Pancreas (tissue), 10 donors: ENCODE measurements at regions of chr1 and their contacts with region 1.

Region 1: GRCh38 chr1:209576798-209577197 is 6.7 kb upstream of the CAMK1G start:
- DNase-seq: peak; percentile 64 to 93 (median 84)
- ATAC-seq: peak; percentile 91 to 100 (median 100)
- H3K4me3 ChIP-seq: no peak overlapping the region
- H3K27ac ChIP-seq: no peak overlapping the region
- H3K4me1 ChIP-seq: no peaks in the 10 kb centered on the region
- H3K27me3 ChIP-seq: peaks cover 0 to 3% (median 0%) of the 10 kb centered on the region in 4 donors
- CTCF ChIP-seq: peak; percentile 81 to 92 (median 90)

Region 2: DNA sequence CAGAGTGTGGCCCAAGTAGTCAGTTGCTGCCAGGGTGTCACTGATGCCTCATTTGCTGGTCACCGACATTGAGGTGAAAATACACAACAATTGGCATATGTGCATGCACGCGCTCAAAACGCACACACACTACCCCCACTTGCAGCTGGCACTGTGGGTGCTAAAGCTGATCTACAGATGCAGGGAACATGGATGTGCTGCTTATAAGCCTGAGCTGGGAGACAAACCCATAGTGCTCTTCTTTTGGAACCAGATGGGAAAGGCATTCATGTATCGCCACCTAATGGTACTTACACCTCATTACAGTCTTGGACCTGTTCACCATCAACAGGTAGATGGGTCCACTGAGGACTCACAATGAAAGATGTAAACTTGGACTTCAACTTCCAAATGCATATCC is 63.6 kb before region 1 on chr1:
- intact Hi-C with region 1: no loop called
- DNase-seq: no peak
- ATAC-seq: no peak
- H3K4me3 ChIP-seq: no peak overlapping the region
- H3K27ac ChIP-seq: no peak overlapping the region
- H3K4me1 ChIP-seq: no peaks in the 10 kb centered on the region
- H3K27me3 ChIP-seq: no peaks in the 10 kb centered on the region
- CTCF ChIP-seq: no peak

Region 3: DNA sequence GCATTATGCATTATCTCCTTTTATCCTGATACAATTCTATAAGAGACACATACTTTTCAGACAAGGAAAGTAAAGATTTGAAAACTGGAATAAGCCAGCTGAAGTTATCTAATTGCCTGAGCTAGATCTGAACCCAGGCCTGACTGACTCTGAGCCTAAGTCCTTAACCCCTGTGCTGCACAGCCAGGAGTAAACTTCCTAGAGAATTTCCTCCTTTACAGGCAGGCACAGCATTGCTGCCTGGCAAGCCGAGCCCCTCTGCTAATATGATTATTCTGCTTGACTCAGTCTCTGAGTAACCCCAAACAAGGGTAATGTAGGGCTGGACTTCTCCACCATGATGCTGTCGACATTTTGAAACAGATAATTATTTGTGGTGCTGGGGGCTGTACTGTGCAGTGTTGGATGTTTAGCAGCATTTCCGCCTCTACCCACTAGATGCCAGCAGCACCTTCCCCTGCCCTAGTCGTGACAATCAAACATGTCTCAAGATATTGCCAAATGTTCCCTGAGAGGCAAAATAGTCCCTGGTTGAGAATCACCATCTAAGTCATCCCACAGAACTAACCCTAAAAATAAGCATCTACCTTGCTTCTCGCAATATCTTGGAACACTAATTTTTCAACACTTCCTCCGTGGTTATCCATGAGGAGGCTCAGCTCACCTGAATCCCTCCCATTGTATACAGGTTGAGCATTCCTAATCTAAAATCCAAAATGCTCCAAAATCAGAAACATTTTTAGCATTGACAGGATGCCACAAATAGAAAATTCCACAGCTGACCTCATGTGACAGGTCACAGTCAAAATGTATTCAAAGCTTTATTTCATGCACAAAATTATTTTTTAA is 25.2 kb after region 1 on chr1:
- intact Hi-C with region 1: no loop called
- DNase-seq: peak in 2 of 6 donors; percentile 20 to 55
- ATAC-seq: peak; percentile 88 to 97 (median 95)
- H3K4me3 ChIP-seq: no peak overlapping the region
- H3K27ac ChIP-seq: no peak overlapping the region
- H3K4me1 ChIP-seq: no peaks in the 10 kb centered on the region
- H3K27me3 ChIP-seq: no peaks in the 10 kb centered on the region
- CTCF ChIP-seq: peak; percentile 21 to 69 (median 56)

Region 4: GRCh38 chr1:209633335-209633997 is 56.7 kb after region 1 on chr1:
- intact Hi-C with region 1: loop called in 1 of 3 experiments (anchors 10 kb)
- DNase-seq: no peak
- ATAC-seq: no peak
- H3K4me3 ChIP-seq: no peak overlapping the region
- H3K27ac ChIP-seq: no peak overlapping the region
- H3K4me1 ChIP-seq: no peaks in the 10 kb centered on the region
- H3K27me3 ChIP-seq: no peaks in the 10 kb centered on the region
- CTCF ChIP-seq: no peak

Region 5: GRCh38 chr1:209743145-209743482 is 166.3 kb after region 1 on chr1:
- intact Hi-C with region 1: loop called in 1 of 3 experiments (anchors 5 kb)
- DNase-seq: peak in 3 of 6 donors; percentile 14 to 45 (median 45)
- ATAC-seq: peak in 1 of 4 donors; percentile 18
- H3K4me3 ChIP-seq: no peak overlapping the region
- H3K27ac ChIP-seq: peak overlapping the region in 3 of 4 donors; percentile 22 to 50 (median 48)
- H3K4me1 ChIP-seq: peaks cover 0 to 13% (median 0%) of the 10 kb centered on the region in 3 donors
- H3K27me3 ChIP-seq: no peaks in the 10 kb centered on the region
- CTCF ChIP-seq: no peak

Region 6: DNA sequence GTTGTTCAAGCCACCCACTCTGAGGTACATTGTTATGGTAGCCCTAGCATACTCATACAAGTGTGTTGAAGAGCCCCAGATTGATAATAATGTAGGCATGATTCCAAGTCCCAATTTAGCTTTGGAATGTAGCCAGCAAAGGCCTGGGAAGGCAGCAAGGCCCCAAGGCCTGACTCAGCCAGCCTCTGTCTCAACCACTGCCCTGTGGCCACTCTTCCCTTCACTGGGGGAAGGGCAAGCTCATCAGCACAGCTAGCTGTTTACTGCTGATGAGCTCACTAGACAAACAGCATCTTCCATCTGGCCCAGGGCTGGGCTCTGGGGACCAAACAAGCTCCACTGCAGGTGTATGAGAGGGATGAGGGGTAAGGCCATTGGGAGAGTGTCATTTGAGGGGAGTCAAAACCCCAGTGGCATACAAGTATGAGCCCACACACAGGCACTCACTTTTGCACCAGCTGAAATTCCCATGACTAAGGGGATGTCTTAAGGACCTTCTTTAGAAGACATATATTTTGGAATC is 231.3 kb after region 1 on chr1:
- intact Hi-C with region 1: no loop called
- DNase-seq: no peak
- ATAC-seq: no peak
- H3K4me3 ChIP-seq: no peak overlapping the region
- H3K27ac ChIP-seq: no peak overlapping the region
- H3K4me1 ChIP-seq: peaks cover 6 to 17% (median 14%) of the 10 kb centered on the region in 3 donors
- H3K27me3 ChIP-seq: no peaks in the 10 kb centered on the region
- CTCF ChIP-seq: no peak

Region 7: DNA sequence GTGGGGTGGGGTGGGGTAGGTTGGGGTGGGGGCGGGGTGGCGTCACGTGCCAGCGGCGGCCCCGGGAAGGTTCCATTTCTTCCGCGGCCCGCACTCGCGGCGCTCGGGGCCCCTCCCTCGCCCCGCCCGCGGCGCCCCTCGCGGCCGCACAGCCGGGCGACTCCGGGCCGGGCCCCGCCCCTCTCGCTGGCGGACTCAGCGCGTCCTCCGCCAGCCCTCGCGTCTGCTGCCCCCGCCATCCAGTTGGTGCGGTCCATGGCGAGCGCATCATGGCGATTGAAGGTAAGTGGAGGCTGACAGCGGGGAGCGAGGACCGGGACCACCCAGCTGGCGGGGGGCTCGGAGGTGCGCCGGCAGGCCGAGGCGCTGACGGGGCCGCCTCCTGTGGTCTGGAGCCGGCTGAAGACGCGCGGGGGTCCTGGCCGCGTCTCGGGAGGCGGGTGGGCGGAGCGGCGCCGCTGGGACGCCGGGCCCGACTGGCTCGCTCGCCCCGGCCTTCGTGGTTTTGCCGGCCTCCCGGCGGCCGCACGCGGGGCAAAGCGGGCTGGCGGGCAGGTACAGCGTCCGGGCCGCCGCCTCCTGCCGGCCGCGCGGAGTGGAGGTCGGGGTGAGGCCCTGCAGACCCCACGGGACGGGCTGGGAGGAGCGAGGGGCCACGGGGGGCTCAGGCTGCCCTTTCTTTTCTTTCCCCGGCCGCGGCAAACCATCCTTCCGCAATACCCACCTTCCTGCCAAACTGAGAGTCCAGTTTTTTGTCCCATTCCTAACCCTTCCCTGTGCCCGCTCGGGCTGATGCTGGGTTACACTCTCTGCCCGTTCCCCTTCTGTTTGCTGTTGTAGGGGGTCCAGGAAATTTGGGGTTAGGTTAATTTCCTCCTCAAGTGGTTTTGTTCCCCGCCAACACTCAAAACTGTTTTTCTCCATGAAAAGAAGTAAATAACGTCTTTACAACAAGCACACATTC is 361.5 kb after region 1 on chr1 and contains the start of gene SYT14:
- intact Hi-C with region 1: no loop called
- DNase-seq: peak in 5 of 6 donors; percentile 9 to 72 (median 28)
- ATAC-seq: peak; percentile 48 to 91 (median 78)
- H3K4me3 ChIP-seq: peak within 1 kb of the TSS in 3 of 4 donors; percentile 7 to 41 (median 29)
- H3K27ac ChIP-seq: no peak within 1 kb of the TSS
- H3K4me1 ChIP-seq: no peaks in the 10 kb centered on the region
- H3K27me3 ChIP-seq: peaks cover 0 to 38% (median 2%) of the 10 kb centered on the region in 4 donors
- CTCF ChIP-seq: no peak
- total RNA-seq, gene SYT14: 0.14 to 1.0 (median 0.54) TPM